CD8-positive, alpha-beta T cell (primary cell): ENCODE measurements at regions of chr10 and their contacts with region 1.

Region 1: DNA sequence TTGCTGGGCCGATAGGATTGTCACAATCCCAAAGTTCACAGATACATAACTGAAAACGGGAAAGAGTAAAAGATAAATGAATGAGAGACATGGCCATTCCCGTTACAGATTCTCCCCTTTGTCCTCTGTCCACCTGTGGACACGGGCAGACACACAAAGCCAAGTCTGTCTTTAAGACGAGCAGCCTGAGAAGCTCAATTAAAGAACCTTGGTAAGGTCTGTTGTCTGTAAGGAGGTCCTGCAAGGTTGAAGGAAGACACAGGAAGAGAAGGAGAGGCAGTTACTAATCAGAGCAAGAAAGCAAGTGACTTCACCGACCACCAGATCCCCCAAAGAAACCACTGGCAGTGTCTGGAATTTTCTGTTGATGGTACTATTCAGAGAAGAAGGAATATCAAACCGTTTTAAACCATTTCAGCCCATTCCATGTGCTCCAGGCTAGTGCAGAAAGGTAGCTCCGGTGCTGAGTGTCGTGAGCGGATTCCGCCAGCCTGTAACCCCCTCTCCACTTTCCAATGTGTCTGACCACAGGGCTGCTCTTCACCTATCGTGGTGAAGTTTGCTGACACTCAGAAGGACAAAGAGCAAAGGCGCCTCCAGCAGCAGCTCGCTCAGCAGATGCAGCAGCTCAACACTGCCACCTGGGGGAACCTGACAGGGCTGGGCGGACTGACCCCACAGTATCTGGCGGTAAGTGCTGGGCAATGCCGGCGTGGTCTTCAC is 252.6 kb downstream of the CELF2 start:
- DNase-seq: peak; percentile 43 to 81 (median 74)
- ATAC-seq: peak; percentile 81
- H3K4me3 ChIP-seq: no peak overlapping the region
- H3K4me3 Mint-ChIP-seq: no peak overlapping the region
- H3K27ac ChIP-seq: peak overlapping the region in 1 of 2 experiments; percentile 34
- H3K27ac Mint-ChIP-seq: peak overlapping the region; percentile 77
- H3K4me1 ChIP-seq: peaks cover 13% of the 10 kb centered on the region
- H3K4me1 Mint-ChIP-seq: peaks cover 68% of the 10 kb centered on the region
- H3K27me3 ChIP-seq: no peaks in the 10 kb centered on the region
- H3K27me3 Mint-ChIP-seq: no peaks in the 10 kb centered on the region
- CTCF ChIP-seq: peak; percentile 83

Region 2: DNA sequence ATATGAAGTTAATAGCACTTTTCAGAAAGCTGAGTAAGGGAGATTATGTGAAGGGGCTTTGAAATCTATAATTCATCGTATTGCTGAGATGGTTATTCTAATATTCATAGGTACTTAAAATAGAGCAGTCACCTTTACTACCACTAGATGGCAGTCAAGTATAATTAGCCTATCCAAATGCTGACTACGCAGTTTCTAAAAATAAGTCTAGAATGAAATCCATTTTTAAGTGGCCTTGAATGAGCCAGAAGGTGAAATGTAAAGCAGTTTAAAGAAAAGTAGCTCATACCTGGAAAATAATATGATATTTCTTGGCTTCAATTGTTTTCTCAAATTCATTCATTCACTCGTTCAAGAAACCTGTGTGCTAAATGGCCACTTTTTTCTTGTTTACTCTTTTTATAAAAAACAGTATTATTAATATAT is 1938.7 kb before region 1 on chr10:
- CTCF ChIA-PET with region 1: no interaction called
- POLR2A ChIA-PET with region 1: no interaction called
- intact Hi-C with region 1: loop called in 1 of 2 experiments (anchors 10 kb)
- DNase-seq: peak in 2 of 9 experiments; percentile 56 to 66
- ATAC-seq: peak; percentile 61
- H3K4me3 ChIP-seq: no peak overlapping the region
- H3K4me3 Mint-ChIP-seq: no peak overlapping the region
- H3K27ac ChIP-seq: no peak overlapping the region
- H3K27ac Mint-ChIP-seq: no peak overlapping the region
- H3K4me1 ChIP-seq: no peaks in the 10 kb centered on the region
- H3K4me1 Mint-ChIP-seq: no peaks in the 10 kb centered on the region
- H3K27me3 ChIP-seq: peaks cover 0 to 2% of the 10 kb centered on the region in 2 experiments
- H3K27me3 Mint-ChIP-seq: peaks cover 24% of the 10 kb centered on the region
- CTCF ChIP-seq: peak; percentile 80

Region 3: DNA sequence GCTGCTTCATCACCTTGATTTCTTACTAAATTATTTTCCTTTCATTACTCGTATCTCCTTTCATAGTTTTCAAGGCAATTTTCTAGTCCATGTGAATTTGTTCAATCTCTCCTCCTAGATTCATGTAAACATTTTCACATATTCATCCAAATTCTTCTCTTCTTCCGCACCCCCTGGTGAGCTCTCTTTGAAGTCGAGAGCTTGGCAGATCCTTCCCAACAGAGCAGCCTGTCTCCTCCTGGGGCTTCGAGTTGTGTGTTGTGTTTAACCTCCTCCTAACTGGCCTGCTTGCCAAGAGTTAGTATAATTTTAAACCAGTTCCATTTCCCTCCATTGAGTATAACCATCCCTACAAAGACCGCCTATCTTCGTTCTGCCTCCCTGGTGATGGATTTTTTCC is 525.0 kb before region 1 on chr10:
- CTCF ChIA-PET with region 1: no interaction called
- POLR2A ChIA-PET with region 1: no interaction called
- intact Hi-C with region 1: no loop called
- DNase-seq: no peak
- ATAC-seq: no peak
- H3K4me3 ChIP-seq: no peak overlapping the region
- H3K4me3 Mint-ChIP-seq: no peak overlapping the region
- H3K27ac ChIP-seq: no peak overlapping the region
- H3K27ac Mint-ChIP-seq: no peak overlapping the region
- H3K4me1 ChIP-seq: no peaks in the 10 kb centered on the region
- H3K4me1 Mint-ChIP-seq: no peaks in the 10 kb centered on the region
- H3K27me3 ChIP-seq: no peaks in the 10 kb centered on the region
- H3K27me3 Mint-ChIP-seq: peaks cover 16% of the 10 kb centered on the region
- CTCF ChIP-seq: no peak

Region 4: GRCh38 chr10:11170993-11171851 is 99.1 kb before region 1 on chr10:
- CTCF ChIA-PET with region 1: interaction called, 3 read pairs
- POLR2A ChIA-PET with region 1: no interaction called
- intact Hi-C with region 1: loop called in 1 of 2 experiments (anchors 2 kb)
- DNase-seq: peak in 3 of 9 experiments; percentile 23 to 49 (median 40)
- ATAC-seq: no peak
- H3K4me3 ChIP-seq: peak overlapping the region; percentile 74 to 88
- H3K4me3 Mint-ChIP-seq: no peak overlapping the region
- H3K27ac ChIP-seq: peak overlapping the region; percentile 79 to 89
- H3K27ac Mint-ChIP-seq: no peak overlapping the region
- H3K4me1 ChIP-seq: peaks cover 79% of the 10 kb centered on the region
- H3K4me1 Mint-ChIP-seq: peaks cover 2% of the 10 kb centered on the region
- H3K27me3 ChIP-seq: no peaks in the 10 kb centered on the region
- H3K27me3 Mint-ChIP-seq: no peaks in the 10 kb centered on the region
- CTCF ChIP-seq: no peak

Region 5: GRCh38 chr10:11282156-11282555 is 11.9 kb after region 1 on chr10:
- CTCF ChIA-PET with region 1: interaction called, 4 read pairs
- POLR2A ChIA-PET with region 1: no interaction called
- intact Hi-C with region 1: loop called in 1 of 2 experiments (anchors 2 kb)
- DNase-seq: peak in 1 of 9 experiments; percentile 45
- ATAC-seq: no peak
- H3K4me3 ChIP-seq: no peak overlapping the region
- H3K4me3 Mint-ChIP-seq: no peak overlapping the region
- H3K27ac ChIP-seq: no peak overlapping the region
- H3K27ac Mint-ChIP-seq: no peak overlapping the region
- H3K4me1 ChIP-seq: no peaks in the 10 kb centered on the region
- H3K4me1 Mint-ChIP-seq: peaks cover 18% of the 10 kb centered on the region
- H3K27me3 ChIP-seq: no peaks in the 10 kb centered on the region
- H3K27me3 Mint-ChIP-seq: no peaks in the 10 kb centered on the region
- CTCF ChIP-seq: no peak

Region 6: DNA sequence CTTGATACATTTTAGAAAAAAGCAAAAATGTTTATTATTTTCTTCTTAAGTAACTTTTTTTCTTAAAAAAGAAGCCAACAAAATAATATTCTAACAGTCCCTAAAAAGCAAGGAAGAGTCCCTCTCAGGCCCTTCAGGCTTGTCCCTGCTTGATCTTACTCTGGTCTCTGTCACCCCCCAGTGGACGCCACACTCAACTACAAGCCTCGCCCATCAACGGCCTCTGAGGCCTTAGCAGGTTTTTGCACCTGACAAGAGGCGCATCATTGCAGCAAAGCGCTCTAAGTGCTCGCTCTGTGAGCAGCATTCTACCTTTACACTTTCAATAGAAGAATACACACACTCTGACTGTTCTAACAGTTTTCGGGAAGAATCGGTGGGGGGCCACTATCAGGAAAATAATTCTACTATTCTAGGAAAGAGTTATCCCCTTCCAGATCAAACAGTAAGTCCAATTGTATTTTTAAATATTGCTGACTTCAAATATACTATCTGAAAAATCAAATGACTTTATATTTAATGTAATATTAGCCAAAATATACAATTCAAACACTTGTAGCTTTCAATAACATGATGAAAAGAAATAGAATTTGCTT is 202.0 kb after region 1 on chr10:
- CTCF ChIA-PET with region 1: no interaction called
- POLR2A ChIA-PET with region 1: interaction called, 3 read pairs
- intact Hi-C with region 1: loop called in 1 of 2 experiments (anchors 2 kb)
- DNase-seq: peak; percentile 51 to 85 (median 70)
- ATAC-seq: peak; percentile 97
- H3K4me3 ChIP-seq: no peak overlapping the region
- H3K4me3 Mint-ChIP-seq: no peak overlapping the region
- H3K27ac ChIP-seq: no peak overlapping the region
- H3K27ac Mint-ChIP-seq: no peak overlapping the region
- H3K4me1 ChIP-seq: no peaks in the 10 kb centered on the region
- H3K4me1 Mint-ChIP-seq: peaks cover 1% of the 10 kb centered on the region
- H3K27me3 ChIP-seq: no peaks in the 10 kb centered on the region
- H3K27me3 Mint-ChIP-seq: no peaks in the 10 kb centered on the region
- CTCF ChIP-seq: peak; percentile 97